ENCODE measurements at regions of chr14 and their contacts with region 1.

Region 1: GRCh38 chr14:54509546-54510501 is at the start of gene CGRRF1:
- DNase-seq: peak; percentile 91 to 95 (median 92)
- ATAC-seq: peak; percentile 99
- H3K4me3 ChIP-seq: peak within 1 kb of the TSS; percentile 92
- H3K27ac ChIP-seq: peak within 1 kb of the TSS; percentile 55; the same call in 2 of the 3 replicates
- H3K4me1 ChIP-seq: peaks cover 2 to 10% of the 10 kb centered on the region in 2 experiments; a peak in 2 of 5 replicates
- H3K27me3 ChIP-seq: no peaks in the 10 kb centered on the region
- CTCF ChIP-seq: peak; percentile 44 to 60 (median 46)
- EP300 ChIP-seq: peak; percentile 8; the same call in 1 of the 2 replicates
- POLR2A ChIP-seq: peak; percentile 52; the same call in 1 of the 2 replicates
- RAD21 ChIP-seq: peak; percentile 9 to 24; a peak in 1 of 4 replicates
- polyA plus RNA-seq, gene CGRRF1: 13.5 to 15.8 TPM

Region 2: DNA sequence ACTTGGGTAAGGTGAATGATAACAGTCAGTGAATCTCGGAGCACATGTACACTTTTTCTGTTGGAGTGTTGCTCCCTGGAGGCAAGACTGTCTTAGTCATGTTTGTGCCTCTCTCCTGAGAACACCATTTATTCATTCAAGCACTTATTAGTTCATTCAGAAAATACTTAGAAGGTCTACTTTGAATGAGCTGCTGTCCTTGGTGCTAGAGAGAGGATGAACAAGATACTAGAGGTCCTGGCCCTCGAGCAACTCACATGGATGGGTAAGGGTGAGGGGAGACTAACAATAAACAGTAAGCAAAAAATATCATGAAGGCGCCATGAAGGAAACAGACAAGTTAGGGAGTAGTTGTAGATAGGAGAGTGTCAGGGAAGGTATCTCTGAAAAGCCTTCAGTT is 40.0 kb after region 1 on chr14:
- CTCF ChIA-PET with region 1: no interaction called
- POLR2A ChIA-PET with region 1: no interaction called
- in situ Hi-C with region 1: no loop called
- intact Hi-C with region 1: loop called (anchors 5 kb)
- DNase-seq: no peak
- ATAC-seq: no peak
- H3K4me3 ChIP-seq: no peak overlapping the region
- H3K27ac ChIP-seq: no peak overlapping the region
- H3K4me1 ChIP-seq: no peaks in the 10 kb centered on the region
- H3K27me3 ChIP-seq: no peaks in the 10 kb centered on the region
- CTCF ChIP-seq: no peak
- EP300 ChIP-seq: no peak
- POLR2A ChIP-seq: no peak
- RAD21 ChIP-seq: no peak

Region 3: GRCh38 chr14:54572316-54572715 is 62.5 kb after region 1 on chr14:
- CTCF ChIA-PET with region 1: no interaction called
- POLR2A ChIA-PET with region 1: no interaction called
- in situ Hi-C with region 1: no loop called
- intact Hi-C with region 1: no loop called
- DNase-seq: peak in 3 of 4 experiments; percentile 29 to 46 (median 41)
- ATAC-seq: 0 out of 3 replicates have a peak, but pooled peaks have one; percentile 11
- H3K4me3 ChIP-seq: no peak overlapping the region
- H3K27ac ChIP-seq: no peak overlapping the region
- H3K4me1 ChIP-seq: peaks cover 12 to 13% of the 10 kb centered on the region in 2 experiments; a peak in 4 of 5 replicates
- H3K27me3 ChIP-seq: no peaks in the 10 kb centered on the region
- CTCF ChIP-seq: peak; percentile 57 to 60 (median 57); a peak in 5 of 6 replicates
- EP300 ChIP-seq: no peak
- POLR2A ChIP-seq: no peak
- RAD21 ChIP-seq: peak; percentile 17 to 68; a peak in 3 of 4 replicates